Heart right ventricle (tissue), 16 donors: ENCODE measurements at regions of chr14 and their contacts with region 1.

Region 1: DNA sequence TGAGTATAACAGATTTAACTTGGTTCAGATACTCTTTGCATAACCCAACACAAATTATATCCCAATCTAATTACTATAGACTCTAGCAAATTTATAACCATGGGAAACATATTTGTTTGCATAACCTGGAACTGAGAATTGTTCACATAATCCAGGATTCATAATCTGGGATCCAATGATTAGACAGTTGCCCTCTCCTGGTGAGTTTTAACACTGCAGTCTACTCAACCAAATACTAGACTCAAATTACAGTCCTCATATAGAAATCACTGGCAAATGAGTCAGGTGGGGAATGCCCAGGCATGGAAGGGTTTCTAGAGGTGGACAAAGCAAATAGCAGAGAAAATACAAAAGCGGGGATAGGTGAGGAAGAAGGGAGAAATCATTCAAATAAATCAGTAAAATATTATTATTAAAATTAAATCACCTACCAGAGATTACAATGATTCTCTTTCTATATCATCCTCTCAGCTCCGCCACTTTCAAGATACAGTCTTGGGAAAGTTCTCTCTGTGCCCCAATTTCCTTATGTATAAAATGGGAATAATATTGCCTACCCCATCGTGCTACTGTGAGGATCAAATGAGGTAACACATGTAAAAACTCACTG is 9.4 kb downstream of the GCH1 start:
- DNase-seq: peak in 1 of 2 donors; percentile 45
- ATAC-seq: peak in 4 of 8 donors; percentile 29 to 58 (median 46)
- H3K4me3 ChIP-seq: no peak overlapping the region
- H3K27ac ChIP-seq: no peak overlapping the region
- H3K4me1 ChIP-seq: peaks cover 0 to 10% (median 0%) of the 10 kb centered on the region in 9 donors
- H3K27me3 ChIP-seq: no peaks in the 10 kb centered on the region
- CTCF ChIP-seq: peak; percentile 58 to 84 (median 77)

Region 2: GRCh38 chr14:54805521-54806322 is 87.5 kb before region 1 on chr14:
- intact Hi-C with region 1: loop called in 4 of 10 experiments (anchors 5 to 10 kb)
- DNase-seq: peak; percentile 86 to 87
- ATAC-seq: peak; percentile 87 to 95 (median 92)
- H3K4me3 ChIP-seq: peak overlapping the region in 4 of 10 donors; percentile 2 to 36 (median 18)
- H3K27ac ChIP-seq: no peak overlapping the region
- H3K4me1 ChIP-seq: peaks cover 0 to 11% (median 9%) of the 10 kb centered on the region in 9 donors
- H3K27me3 ChIP-seq: no peaks in the 10 kb centered on the region
- CTCF ChIP-seq: peak; percentile 90 to 98 (median 96)